Endothelial cell of umbilical vein (primary cell): ENCODE measurements at regions of chr17 and their contacts with region 1.

Region 1: DNA sequence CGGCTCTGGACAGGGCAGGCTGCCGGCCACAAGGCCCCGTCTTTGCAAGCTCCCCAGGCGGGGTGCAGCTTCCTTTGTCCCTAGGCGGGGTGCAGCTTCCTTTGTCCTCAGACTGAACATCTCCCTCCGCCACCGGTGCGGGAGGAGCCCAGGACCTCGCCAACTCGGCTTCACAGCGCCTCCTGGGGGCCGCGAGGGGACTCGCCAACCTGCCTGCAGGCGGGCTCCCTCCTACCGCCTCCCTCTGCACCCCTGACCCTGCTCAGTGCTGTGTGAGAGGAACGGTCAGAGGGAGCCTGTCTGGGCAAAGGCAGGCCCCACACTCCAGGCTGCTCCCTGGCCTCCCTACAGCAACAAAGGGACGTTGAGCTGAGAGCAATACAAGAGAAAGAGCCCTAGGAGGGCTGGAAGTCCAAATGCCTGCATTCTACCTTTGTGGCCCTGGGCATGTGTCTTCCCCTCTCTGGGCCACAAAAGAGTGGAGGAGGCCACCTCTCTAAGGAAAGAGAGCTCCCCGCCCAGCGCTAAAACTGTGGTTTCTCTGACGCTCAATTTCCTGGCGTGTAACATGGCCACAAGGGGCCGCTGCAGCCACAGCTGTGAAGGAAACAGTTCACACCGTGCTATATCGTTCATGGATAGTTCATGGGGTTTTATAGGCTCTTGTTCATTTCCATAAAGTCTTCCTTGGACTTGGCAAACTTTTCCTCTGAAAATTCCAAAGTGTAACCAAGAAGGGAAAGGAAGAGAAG is 20.9 kb upstream of the KRT19 start:
- DNase-seq: peak; percentile 74
- H3K4me3 ChIP-seq: peak overlapping the region in 2 of 3 experiments; percentile 20 to 23
- H3K27ac ChIP-seq: peak overlapping the region; percentile 74
- H3K4me1 ChIP-seq: peaks cover 19% of the 10 kb centered on the region
- H3K27me3 ChIP-seq: no peaks in the 10 kb centered on the region
- CTCF ChIP-seq: peak; percentile 68 to 95
- POLR2A ChIP-seq: peak; percentile 39

Region 2: GRCh38 chr17:40803617-40804082 is 745.4 kb before region 1 on chr17:
- CTCF ChIA-PET with region 1: interaction called, 7 read pairs
- POLR2A ChIA-PET with region 1: no interaction called
- dilution Hi-C with region 1: no loop called
- intact Hi-C with region 1: loop called (anchors 5 kb)
- DNase-seq: peak; percentile 71
- H3K4me3 ChIP-seq: no peak overlapping the region
- H3K27ac ChIP-seq: no peak overlapping the region
- H3K4me1 ChIP-seq: no peaks in the 10 kb centered on the region
- H3K27me3 ChIP-seq: peaks cover 20 to 39% of the 10 kb centered on the region in 2 experiments
- CTCF ChIP-seq: peak; percentile 85 to 88
- POLR2A ChIP-seq: no peak

Region 3: GRCh38 chr17:40909351-40909750 is 639.7 kb before region 1 on chr17:
- CTCF ChIA-PET with region 1: interaction called, 50 read pairs
- POLR2A ChIA-PET with region 1: no interaction called
- dilution Hi-C with region 1: no loop called
- intact Hi-C with region 1: loop called (anchors 1 kb)
- DNase-seq: peak; percentile 90
- H3K4me3 ChIP-seq: no peak overlapping the region
- H3K27ac ChIP-seq: no peak overlapping the region
- H3K4me1 ChIP-seq: peaks cover 13% of the 10 kb centered on the region
- H3K27me3 ChIP-seq: peaks cover 0 to 3% of the 10 kb centered on the region in 2 experiments
- CTCF ChIP-seq: peak; percentile 75 to 77
- POLR2A ChIP-seq: no peak

Region 4: GRCh38 chr17:41486809-41487720 is 62.0 kb before region 1 on chr17:
- CTCF ChIA-PET with region 1: interaction called, 350 read pairs
- POLR2A ChIA-PET with region 1: no interaction called
- dilution Hi-C with region 1: no loop called
- intact Hi-C with region 1: loop called (anchors 1 kb)
- DNase-seq: peak; percentile 28
- H3K4me3 ChIP-seq: no peak overlapping the region
- H3K27ac ChIP-seq: no peak overlapping the region
- H3K4me1 ChIP-seq: no peaks in the 10 kb centered on the region
- H3K27me3 ChIP-seq: no peaks in the 10 kb centered on the region
- CTCF ChIP-seq: peak; percentile 65 to 80
- POLR2A ChIP-seq: no peak

Region 5: DNA sequence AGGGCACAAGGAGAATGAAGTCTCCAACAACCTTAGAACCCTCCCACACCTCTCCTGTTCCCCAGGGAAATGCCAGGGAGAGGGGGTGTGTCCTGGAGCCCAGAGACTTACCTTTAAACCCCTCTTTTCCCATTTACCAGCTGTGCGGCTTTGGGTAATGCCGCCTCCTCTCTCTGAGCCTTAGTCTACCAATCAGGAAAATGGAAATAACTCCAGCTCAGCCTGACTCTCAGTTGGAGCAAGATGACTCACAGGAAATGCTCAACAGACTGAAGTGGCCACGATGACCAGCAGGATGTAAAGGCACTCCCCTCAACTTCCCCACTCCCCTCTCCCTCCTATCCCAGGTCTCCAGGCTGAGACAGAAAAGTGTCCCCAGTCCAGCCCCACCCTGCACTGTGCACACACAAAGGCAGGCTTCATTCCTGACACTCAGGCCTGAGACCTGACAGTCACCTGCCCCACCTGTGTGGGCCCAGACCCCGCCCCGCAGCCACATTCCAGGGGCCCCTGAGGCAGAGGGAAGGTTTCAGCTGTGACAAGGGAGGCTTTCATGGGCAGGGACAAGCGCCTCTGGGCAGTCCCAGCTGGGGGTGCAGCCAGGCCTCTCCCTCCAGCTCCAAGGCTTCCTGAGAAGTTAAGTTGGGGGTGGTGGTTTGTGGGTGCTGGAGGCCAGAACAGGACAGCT is 27.3 kb before region 1 on chr17:
- CTCF ChIA-PET with region 1: interaction called, 126 read pairs
- POLR2A ChIA-PET with region 1: interaction called, 6 read pairs
- dilution Hi-C with region 1: no loop called
- intact Hi-C with region 1: loop called (anchors 1 kb)
- DNase-seq: peak; percentile 70
- H3K4me3 ChIP-seq: no peak overlapping the region
- H3K27ac ChIP-seq: peak overlapping the region; percentile 80
- H3K4me1 ChIP-seq: peaks cover 24% of the 10 kb centered on the region
- H3K27me3 ChIP-seq: no peaks in the 10 kb centered on the region
- CTCF ChIP-seq: peak in 1 of 2 donors; percentile 5
- POLR2A ChIP-seq: peak; percentile 29

Region 6: DNA sequence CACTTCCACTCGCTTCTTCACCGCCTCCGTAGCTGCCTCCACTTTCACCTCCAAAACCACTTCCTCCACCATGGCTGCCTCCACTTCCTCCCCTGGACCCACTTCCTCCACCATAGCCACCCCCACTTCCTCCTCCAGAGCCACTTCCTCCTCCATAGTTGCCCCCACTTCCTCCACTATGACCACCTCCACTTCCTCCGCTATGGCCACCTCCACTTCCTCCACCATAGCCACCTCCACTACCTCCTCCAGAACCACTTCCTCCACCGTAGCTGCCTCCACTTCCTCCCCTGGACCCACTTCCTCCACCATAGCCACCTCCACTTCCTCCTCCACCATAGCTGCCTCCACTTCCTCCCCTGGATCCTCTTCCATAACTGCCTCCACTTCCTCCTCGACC is 18.3 kb after region 1 on chr17:
- CTCF ChIA-PET with region 1: interaction called, 29 read pairs
- POLR2A ChIA-PET with region 1: no interaction called
- dilution Hi-C with region 1: no loop called
- intact Hi-C with region 1: no loop called
- DNase-seq: no peak
- H3K4me3 ChIP-seq: no peak overlapping the region
- H3K27ac ChIP-seq: no peak overlapping the region
- H3K4me1 ChIP-seq: no peaks in the 10 kb centered on the region
- H3K27me3 ChIP-seq: peaks cover 18 to 24% of the 10 kb centered on the region in 2 experiments
- CTCF ChIP-seq: no peak
- POLR2A ChIP-seq: no peak

Region 7: DNA sequence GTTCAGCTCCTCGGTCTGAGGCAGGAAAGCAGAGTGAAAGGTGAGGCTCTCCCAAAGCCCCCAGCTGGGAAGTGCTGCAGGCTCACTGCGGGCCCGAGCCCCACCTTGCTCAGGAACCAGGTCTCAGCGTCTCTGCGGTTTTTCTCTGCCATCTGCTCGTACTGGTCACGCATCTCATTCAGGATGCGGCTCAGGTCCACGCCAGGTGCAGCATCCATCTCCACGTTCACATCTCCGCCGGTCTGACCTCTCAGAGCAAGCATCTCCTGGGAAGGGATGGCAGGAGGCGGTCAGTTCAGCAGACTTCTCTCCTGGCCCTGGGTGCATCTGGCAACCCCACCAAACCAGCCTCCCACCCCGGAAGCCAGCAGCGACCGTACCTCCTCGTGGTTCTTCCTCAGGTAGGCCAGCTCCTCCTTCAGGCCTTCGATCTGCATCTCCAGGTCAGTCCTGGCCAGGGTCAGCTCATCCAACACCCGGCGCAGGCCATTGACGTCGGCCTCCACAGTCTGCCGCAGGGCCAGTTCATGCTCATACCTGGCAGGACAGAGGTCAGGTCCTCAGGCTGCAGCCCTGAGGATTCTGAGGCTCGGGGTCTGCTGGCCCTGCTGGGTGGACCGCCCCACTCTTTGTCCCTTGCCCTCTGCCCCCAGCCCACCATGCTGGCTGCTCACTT is 62.1 kb after region 1 on chr17:
- CTCF ChIA-PET with region 1: no interaction called
- POLR2A ChIA-PET with region 1: no interaction called
- dilution Hi-C with region 1: no loop called
- intact Hi-C with region 1: no loop called
- DNase-seq: no peak
- H3K4me3 ChIP-seq: no peak overlapping the region
- H3K27ac ChIP-seq: no peak overlapping the region
- H3K4me1 ChIP-seq: no peaks in the 10 kb centered on the region
- H3K27me3 ChIP-seq: no peaks in the 10 kb centered on the region
- CTCF ChIP-seq: no peak
- POLR2A ChIP-seq: no peak

Region 8: DNA sequence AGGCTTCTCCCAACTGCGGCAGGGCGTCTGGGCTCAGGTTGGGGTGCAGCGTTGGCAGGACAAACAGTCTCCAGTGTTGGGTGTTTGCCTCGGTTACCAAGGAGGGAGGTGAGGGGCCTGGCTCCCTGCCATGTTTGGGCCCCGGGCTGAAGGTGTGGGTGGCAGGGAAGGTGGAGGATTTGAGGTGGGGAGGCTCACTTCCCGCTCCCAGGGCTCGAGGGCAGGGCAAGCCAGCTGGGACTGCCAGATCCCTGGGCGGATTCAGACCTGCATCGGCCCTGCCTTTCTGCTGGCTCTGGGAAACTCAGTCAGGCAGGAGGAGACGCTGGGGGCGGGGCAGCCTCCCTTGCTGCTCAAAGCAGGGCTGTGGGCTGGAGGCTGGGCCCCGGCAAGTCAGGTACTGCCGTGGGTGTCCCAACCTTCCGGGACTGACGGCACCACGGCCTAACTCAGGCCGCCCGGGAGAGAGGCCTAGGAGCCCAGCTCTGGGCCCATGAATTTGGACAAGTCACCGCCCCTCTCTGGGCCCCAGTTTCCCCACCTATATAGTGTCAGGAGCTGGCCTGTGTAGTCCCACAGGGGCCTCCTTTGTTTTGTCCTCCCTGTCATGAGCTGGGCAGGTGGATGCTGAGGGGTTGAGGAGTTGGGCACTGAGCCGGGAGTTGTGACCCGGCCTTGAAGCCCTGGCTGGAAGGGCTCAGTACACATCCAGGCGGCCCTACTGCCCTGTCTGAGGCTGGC is 106.8 kb after region 1 on chr17:
- CTCF ChIA-PET with region 1: interaction called, 369 read pairs
- POLR2A ChIA-PET with region 1: no interaction called
- dilution Hi-C with region 1: no loop called
- intact Hi-C with region 1: no loop called
- DNase-seq: no peak
- H3K4me3 ChIP-seq: no peak overlapping the region
- H3K27ac ChIP-seq: no peak overlapping the region
- H3K4me1 ChIP-seq: no peaks in the 10 kb centered on the region
- H3K27me3 ChIP-seq: peaks cover 0 to 1% of the 10 kb centered on the region in 2 experiments
- CTCF ChIP-seq: no peak
- POLR2A ChIP-seq: no peak

Region 9: DNA sequence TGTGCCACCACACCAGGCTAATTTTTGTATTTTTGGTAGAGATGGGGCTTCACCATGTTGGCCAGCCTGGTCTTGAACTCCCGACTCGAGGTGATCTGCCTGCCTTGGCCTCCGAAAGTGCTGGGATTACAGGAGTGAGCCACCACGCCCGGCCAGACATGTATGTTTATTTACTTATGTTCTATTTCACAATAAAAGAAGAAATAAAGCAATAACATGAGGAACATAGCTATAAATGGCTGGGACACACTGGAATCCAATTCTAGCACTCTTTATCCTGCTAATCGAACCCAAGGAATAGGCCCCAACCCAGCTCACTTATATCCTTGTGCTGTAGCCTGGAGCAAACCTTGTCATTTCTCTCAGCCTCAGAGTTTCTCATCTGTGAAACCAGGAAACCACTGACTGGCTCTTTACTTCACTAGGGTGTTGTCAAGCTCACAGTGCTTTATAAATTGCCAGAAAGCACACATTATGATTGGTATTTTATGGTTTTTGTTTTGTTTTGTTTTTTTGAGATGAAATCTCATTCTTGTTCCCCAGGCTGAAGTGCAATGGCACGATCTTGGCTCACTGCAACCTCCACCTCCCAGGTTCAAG is 377.1 kb after region 1 on chr17:
- CTCF ChIA-PET with region 1: no interaction called
- POLR2A ChIA-PET with region 1: no interaction called
- dilution Hi-C with region 1: no loop called
- intact Hi-C with region 1: no loop called
- DNase-seq: no peak
- H3K4me3 ChIP-seq: no peak overlapping the region
- H3K27ac ChIP-seq: no peak overlapping the region
- H3K4me1 ChIP-seq: peaks cover 8% of the 10 kb centered on the region
- H3K27me3 ChIP-seq: no peaks in the 10 kb centered on the region
- CTCF ChIP-seq: no peak
- POLR2A ChIP-seq: no peak